A673 (cell line): ENCODE measurements at regions of chrX and their contacts with region 1.

Region 1: DNA sequence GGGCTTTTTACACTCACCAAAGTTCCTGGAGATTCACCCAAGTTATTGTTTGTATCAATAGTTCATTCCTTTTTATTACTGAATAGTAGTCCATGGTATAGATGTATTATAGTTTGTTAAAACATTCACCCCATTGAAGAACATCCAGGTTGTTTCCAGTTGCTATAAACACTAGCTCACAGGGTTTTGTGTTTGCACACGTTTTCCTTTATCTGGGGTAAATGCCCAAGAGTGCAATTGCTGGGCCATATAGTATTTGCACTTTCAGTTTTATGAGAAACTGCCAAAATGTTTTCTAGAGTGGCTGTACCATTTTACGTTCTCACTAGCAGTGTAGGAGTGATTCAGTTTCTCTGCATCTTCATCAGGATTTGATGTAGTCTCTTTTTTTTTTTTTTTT is 57.1 kb downstream of the CBLL2 start:
- DNase-seq: no peak
- H3K4me3 ChIP-seq: no peak overlapping the region
- H3K27ac ChIP-seq: no peak overlapping the region
- H3K4me1 ChIP-seq: no peaks in the 10 kb centered on the region
- H3K27me3 ChIP-seq: no peaks in the 10 kb centered on the region
- CTCF ChIP-seq: no peak

Region 2: DNA sequence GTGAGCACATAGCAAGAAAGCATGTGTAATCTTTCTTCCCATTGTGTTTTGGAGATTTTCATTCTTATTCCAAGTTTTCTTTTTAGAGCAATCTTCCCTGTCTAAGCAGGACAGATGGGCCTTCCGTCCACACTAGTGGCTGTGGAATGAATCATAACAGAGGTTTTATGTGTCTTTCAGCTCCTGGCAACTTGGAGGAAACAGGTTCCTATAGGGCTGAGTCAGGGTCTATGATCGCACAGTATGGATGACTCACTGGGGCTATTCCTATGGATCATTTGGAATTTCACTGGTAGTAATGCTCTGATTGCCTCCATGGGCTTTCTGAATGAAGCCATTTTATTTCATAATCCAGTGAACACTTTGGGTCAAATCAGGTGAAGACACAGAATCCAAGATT is 108.8 kb before region 1 on chrX:
- CTCF ChIA-PET with region 1: no interaction called
- POLR2A ChIA-PET with region 1: no interaction called
- intact Hi-C with region 1: no loop called
- DNase-seq: peak; percentile 5
- H3K4me3 ChIP-seq: no peak overlapping the region
- H3K27ac ChIP-seq: no peak overlapping the region
- H3K4me1 ChIP-seq: no peaks in the 10 kb centered on the region
- H3K27me3 ChIP-seq: no peaks in the 10 kb centered on the region
- CTCF ChIP-seq: no peak

Region 3: GRCh38 chrX:22486296-22486695 is 156.5 kb after region 1 on chrX:
- CTCF ChIA-PET with region 1: no interaction called
- POLR2A ChIA-PET with region 1: interaction called, 10 read pairs
- intact Hi-C with region 1: no loop called
- DNase-seq: peak; percentile 1
- H3K4me3 ChIP-seq: no peak overlapping the region
- H3K27ac ChIP-seq: no peak overlapping the region
- H3K4me1 ChIP-seq: no peaks in the 10 kb centered on the region
- H3K27me3 ChIP-seq: no peaks in the 10 kb centered on the region
- CTCF ChIP-seq: no peak